Caco-2 (cell line): ENCODE measurements at regions of chr20 and their contacts with region 1.

Region 1: GRCh38 chr20:18092890-18093289 is 35.2 kb upstream of the OVOL2 start:
- DNase-seq: no peak
- H3K4me3 ChIP-seq: no peak overlapping the region
- H3K4me3 Mint-ChIP-seq: no peak overlapping the region
- H3K27ac Mint-ChIP-seq: peak overlapping the region; percentile 56
- H3K4me1 ChIP-seq: peaks cover 17% of the 10 kb centered on the region
- H3K4me1 Mint-ChIP-seq: peaks cover 36% of the 10 kb centered on the region
- H3K27me3 ChIP-seq: no peaks in the 10 kb centered on the region
- H3K27me3 Mint-ChIP-seq: no peaks in the 10 kb centered on the region
- CTCF ChIP-seq: no peak

Region 2: GRCh38 chr20:18041456-18041855 is 51.4 kb before region 1 on chr20:
- CTCF ChIA-PET with region 1: no interaction called
- POLR2A ChIA-PET with region 1: interaction called, 13 read pairs
- intact Hi-C with region 1: no loop called
- DNase-seq: no peak
- H3K4me3 ChIP-seq: no peak overlapping the region
- H3K4me3 Mint-ChIP-seq: no peak overlapping the region
- H3K27ac Mint-ChIP-seq: no peak overlapping the region
- H3K4me1 ChIP-seq: no peaks in the 10 kb centered on the region
- H3K4me1 Mint-ChIP-seq: no peaks in the 10 kb centered on the region
- H3K27me3 ChIP-seq: no peaks in the 10 kb centered on the region
- H3K27me3 Mint-ChIP-seq: no peaks in the 10 kb centered on the region
- CTCF ChIP-seq: no peak